ENCODE measurements at regions of chr2 and their contacts with region 1.

Region 1: DNA sequence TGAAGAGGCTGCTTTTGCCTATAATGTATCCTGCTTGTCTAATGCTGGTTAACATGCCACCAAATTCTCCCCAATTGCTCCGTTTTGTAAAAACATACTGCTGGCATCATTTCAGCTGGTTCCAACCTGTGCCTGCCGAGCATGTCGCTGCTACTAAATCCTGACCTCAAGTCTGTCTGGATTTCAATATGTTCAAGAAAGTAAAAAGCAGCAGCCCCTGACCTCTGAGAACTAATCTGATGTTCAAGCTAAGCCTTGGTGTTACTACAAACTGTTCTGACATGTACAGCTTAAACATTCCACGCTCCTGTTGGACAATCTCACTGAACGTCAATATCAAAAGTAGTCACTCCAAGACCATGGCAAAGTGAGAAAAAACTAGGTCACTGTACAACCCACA is 46.3 kb downstream of the SFT2D3 start:
- DNase-seq: no peak
- H3K4me3 ChIP-seq: no peak overlapping the region
- H3K27ac ChIP-seq: no peak overlapping the region
- H3K4me1 ChIP-seq: no peaks in the 10 kb centered on the region
- H3K27me3 ChIP-seq: no peaks in the 10 kb centered on the region
- CTCF ChIP-seq: no peak
- EP300 ChIP-seq: no peak
- POLR2A ChIP-seq: no peak

Region 2: GRCh38 chr2:127330753-127331152 is 416.9 kb before region 1 on chr2:
- intact Hi-C with region 1: no loop called
- DNase-seq: no peak
- H3K4me3 ChIP-seq: no peak overlapping the region
- H3K27ac ChIP-seq: no peak overlapping the region
- H3K4me1 ChIP-seq: no peaks in the 10 kb centered on the region
- H3K27me3 ChIP-seq: no peaks in the 10 kb centered on the region
- CTCF ChIP-seq: no peak
- EP300 ChIP-seq: no peak
- POLR2A ChIP-seq: no peak

Region 3: GRCh38 chr2:127853671-127854070 is 106.0 kb after region 1 on chr2:
- intact Hi-C with region 1: loop called in 1 of 4 experiments (anchors 5 kb)
- DNase-seq: no peak
- H3K4me3 ChIP-seq: no peak overlapping the region
- H3K27ac ChIP-seq: no peak overlapping the region
- H3K4me1 ChIP-seq: peaks cover 13% of the 10 kb centered on the region
- H3K27me3 ChIP-seq: no peaks in the 10 kb centered on the region
- CTCF ChIP-seq: no peak
- EP300 ChIP-seq: no peak
- POLR2A ChIP-seq: no peak